ENCODE measurements at regions of chr19 and their contacts with region 1.

Region 1: GRCh38 chr19:39321832-39322176 is 1.1 kb upstream of the LRFN1 start:
- DNase-seq: no peak
- ATAC-seq: no peak
- H3K4me3 ChIP-seq: no peak overlapping the region
- H3K27ac ChIP-seq: no peak overlapping the region
- H3K4me1 ChIP-seq: peaks cover 0 to 4% (median 0%) of the 10 kb centered on the region in 9 donors
- H3K27me3 ChIP-seq: peaks cover 0 to 20% (median 0%) of the 10 kb centered on the region in 7 donors
- CTCF ChIP-seq: no peak

Region 2: DNA sequence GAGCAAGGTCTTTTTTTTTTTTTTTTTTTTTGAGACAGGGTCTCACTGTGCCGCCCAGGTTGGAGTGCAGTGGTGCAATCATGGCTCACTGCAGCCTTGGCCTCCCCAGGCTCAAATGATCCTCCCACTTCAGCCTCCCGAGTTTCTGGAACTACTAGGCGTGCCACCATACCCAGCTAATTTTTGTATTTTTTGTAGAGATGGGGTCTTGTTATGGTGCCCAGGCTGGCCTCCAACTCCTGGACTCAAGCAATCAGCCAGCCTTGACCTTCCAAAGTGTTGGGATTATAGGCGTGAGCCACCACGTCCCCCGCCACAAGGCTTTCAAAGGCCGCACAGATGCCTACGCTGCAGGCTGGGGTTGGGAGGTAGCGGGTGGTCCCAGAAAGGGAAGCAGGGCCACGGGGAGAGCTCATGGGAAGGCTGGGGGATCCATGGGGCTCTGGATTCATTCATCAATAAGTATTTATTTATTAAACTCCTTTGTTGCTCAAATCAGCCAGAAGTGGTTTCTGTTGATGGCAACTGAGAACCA is 206.2 kb before region 1 on chr19:
- intact Hi-C with region 1: loop called in 4 of 10 experiments (anchors 2 to 5 kb)
- DNase-seq: no peak
- ATAC-seq: no peak
- H3K4me3 ChIP-seq: no peak overlapping the region
- H3K27ac ChIP-seq: no peak overlapping the region
- H3K4me1 ChIP-seq: no peaks in the 10 kb centered on the region
- H3K27me3 ChIP-seq: peaks cover 0 to 66% (median 42%) of the 10 kb centered on the region in 7 donors
- CTCF ChIP-seq: no peak

Region 3: GRCh38 chr19:39363901-39364457 is 42.2 kb after region 1 on chr19:
- intact Hi-C with region 1: no loop called
- DNase-seq: peak; percentile 23 to 33
- ATAC-seq: peak; percentile 23 to 79 (median 63)
- H3K4me3 ChIP-seq: no peak overlapping the region
- H3K27ac ChIP-seq: peak overlapping the region in 6 of 10 donors; percentile 19 to 50 (median 36)
- H3K4me1 ChIP-seq: peaks cover 3 to 24% (median 20%) of the 10 kb centered on the region in 9 donors
- H3K27me3 ChIP-seq: no peaks in the 10 kb centered on the region
- CTCF ChIP-seq: no peak

Measured in heart right ventricle (tissue), 16 donors.